ENCODE measurements at regions of chr14 and their contacts with region 1.

Region 1: DNA sequence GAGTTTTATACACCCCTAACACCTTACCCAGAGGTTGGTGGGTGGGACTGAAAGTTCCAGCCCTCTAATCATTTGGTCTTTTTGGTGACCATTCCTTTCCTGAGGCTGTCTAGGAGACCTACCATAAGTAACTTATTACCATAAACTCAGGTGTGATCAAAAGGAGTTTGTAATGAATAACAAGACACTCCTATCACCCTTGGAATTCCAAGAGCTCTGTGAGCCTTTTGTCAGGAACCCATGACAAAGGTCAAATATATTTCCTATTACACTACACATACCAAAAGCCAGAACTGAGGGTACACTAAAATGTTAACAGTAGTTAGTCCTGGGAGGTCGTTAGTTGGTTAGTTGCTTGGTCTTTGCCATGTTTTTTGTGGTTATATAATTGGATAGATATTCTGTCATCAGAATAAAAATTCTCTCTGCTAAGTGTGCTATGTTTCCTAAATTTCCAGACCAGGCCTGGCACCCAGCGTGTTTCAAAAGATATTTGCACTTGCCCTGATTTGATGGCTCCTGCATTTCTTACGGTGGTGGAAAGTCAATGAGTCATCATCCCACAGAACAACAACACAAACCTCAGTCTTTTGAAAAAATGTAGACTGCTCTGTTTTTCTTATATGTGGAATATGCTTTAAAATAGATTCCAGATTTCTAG is 27.0 kb upstream of the AKAP5 start:
- DNase-seq: no peak
- ATAC-seq: no peak
- H3K4me3 ChIP-seq: no peak overlapping the region
- H3K27ac ChIP-seq: no peak overlapping the region
- H3K4me1 ChIP-seq: no peaks in the 10 kb centered on the region
- H3K27me3 ChIP-seq: no peaks in the 10 kb centered on the region
- CTCF ChIP-seq: no peak
- EP300 ChIP-seq: no peak
- POLR2A ChIP-seq: no peak
- RAD21 ChIP-seq: no peak

Region 2: GRCh38 chr14:63986789-63987533 is 451.4 kb before region 1 on chr14:
- CTCF ChIA-PET with region 1: no interaction called
- POLR2A ChIA-PET with region 1: no interaction called
- RAD21 ChIA-PET with region 1: no interaction called
- SMC1A ChIA-PET with region 1: no interaction called
- in situ Hi-C with region 1: no loop called
- intact Hi-C with region 1: no loop called
- DNase-seq: no peak
- ATAC-seq: no peak
- H3K4me3 ChIP-seq: no peak overlapping the region
- H3K27ac ChIP-seq: no peak overlapping the region
- H3K4me1 ChIP-seq: no peaks in the 10 kb centered on the region; the same call in 1 of the 2 replicates
- H3K27me3 ChIP-seq: no peaks in the 10 kb centered on the region
- CTCF ChIP-seq: no peak
- EP300 ChIP-seq: no peak
- POLR2A ChIP-seq: no peak
- RAD21 ChIP-seq: no peak

Region 3: GRCh38 chr14:64421166-64421565 is 17.1 kb before region 1 on chr14:
- CTCF ChIA-PET with region 1: interaction called, 13 read pairs
- POLR2A ChIA-PET with region 1: interaction called, 6 read pairs
- RAD21 ChIA-PET with region 1: no interaction called
- SMC1A ChIA-PET with region 1: interaction called, 7 read pairs
- in situ Hi-C with region 1: no loop called
- intact Hi-C with region 1: no loop called
- DNase-seq: no peak
- ATAC-seq: no peak
- H3K4me3 ChIP-seq: no peak overlapping the region
- H3K27ac ChIP-seq: no peak overlapping the region
- H3K4me1 ChIP-seq: peaks cover 3% of the 10 kb centered on the region; the same call in 1 of the 2 replicates
- H3K27me3 ChIP-seq: no peaks in the 10 kb centered on the region
- CTCF ChIP-seq: no peak
- EP300 ChIP-seq: no peak
- POLR2A ChIP-seq: no peak
- RAD21 ChIP-seq: no peak

Region 4: DNA sequence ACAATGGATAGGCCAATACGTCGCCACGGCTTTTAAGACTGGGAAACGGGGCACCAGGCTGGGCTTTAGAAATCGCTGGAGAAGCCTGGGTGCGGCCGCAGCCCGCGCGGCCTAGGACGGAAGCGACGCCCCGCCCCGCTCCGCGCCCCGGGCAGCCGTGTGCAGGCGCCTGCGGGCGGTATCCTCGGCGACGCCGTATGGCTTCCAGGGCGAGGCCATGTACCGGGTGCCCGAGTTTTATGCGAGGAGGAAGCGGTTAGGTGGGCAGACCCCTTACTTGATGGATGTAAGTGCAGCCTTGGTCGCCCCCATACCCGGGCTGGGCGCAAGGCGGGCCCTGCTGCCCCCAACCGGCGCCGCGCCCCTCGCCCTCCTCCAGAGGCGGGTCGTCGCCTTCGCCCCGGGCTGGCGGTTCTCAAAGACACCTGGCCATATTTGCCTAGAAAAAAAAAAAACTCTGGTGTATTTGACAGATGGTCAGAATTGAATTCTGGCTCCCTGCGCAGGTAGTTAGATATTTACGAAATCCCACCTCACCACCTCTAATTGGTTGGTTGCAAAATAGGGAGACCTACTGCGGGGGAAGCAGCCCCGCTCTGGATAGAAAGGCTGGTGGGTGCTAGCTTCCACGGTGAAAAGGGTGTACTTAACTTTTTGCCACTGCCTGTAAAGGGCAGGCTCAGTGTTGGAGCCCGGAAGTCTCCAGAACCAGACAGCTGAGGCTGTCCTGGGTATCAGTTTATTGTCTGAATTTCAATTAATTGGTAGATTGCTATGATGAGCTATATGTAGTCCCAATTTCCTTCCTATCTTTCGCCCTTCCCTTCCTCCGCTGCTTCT is 111.7 kb after region 1 on chr14 and contains the start of gene PPP1R36:
- CTCF ChIA-PET with region 1: no interaction called
- POLR2A ChIA-PET with region 1: no interaction called
- RAD21 ChIA-PET with region 1: no interaction called
- SMC1A ChIA-PET with region 1: no interaction called
- in situ Hi-C with region 1: no loop called
- intact Hi-C with region 1: no loop called
- DNase-seq: no peak
- ATAC-seq: peak; percentile 89
- H3K4me3 ChIP-seq: no peak within 1 kb of the TSS
- H3K27ac ChIP-seq: no peak within 1 kb of the TSS
- H3K4me1 ChIP-seq: no peaks in the 10 kb centered on the region
- H3K27me3 ChIP-seq: peaks cover 3 to 14% of the 10 kb centered on the region in 2 experiments
- CTCF ChIP-seq: no peak
- EP300 ChIP-seq: no peak
- POLR2A ChIP-seq: no peak
- RAD21 ChIP-seq: no peak
- polyA plus RNA-seq, gene PPP1R36: not detected